ENCODE measurements at regions of chr14 and their contacts with region 1.

Region 1: DNA sequence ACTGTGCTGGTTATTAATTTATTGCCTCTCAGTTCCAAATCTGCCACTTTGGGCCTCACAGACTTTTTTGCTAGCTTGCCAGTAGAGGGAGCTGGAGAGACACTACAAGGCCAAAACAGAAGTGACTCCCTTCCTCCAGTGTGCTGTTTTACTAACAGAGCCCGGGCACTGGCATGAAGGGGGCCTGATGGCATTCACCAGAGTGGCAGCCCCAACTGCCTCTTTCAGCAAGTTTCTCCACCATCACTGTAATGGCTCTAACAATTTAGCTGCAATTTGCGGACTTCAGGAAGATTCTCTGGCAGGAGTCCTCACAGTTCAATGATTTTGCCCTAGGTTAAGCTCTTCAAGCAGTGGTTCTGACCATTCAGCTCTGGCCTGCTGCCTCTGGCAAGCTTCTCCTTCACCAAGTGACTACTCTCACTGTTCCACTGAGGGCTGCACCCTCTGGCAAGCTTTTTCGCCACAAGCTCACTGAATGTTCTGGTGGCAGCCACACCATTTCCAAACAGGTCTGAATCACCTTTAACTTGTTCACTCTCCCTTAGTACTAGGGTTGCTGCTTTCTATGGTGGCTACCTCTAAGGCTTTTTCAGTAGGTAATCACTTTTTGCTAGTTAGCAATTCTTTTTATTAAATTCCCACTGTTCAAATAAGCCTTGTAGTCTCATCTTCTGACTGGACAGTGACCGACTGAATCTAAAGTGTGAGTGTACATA is 104.9 kb downstream of the ZC3H14 start:
- DNase-seq: peak; percentile 73
- CTCF ChIP-seq: peak; percentile 79

Region 2: GRCh38 chr14:88521821-88522220 is 145.9 kb before region 1 on chr14:
- CTCF ChIA-PET with region 1: no interaction called
- POLR2A ChIA-PET with region 1: no interaction called
- DNase-seq: no peak
- CTCF ChIP-seq: no peak

Region 3: DNA sequence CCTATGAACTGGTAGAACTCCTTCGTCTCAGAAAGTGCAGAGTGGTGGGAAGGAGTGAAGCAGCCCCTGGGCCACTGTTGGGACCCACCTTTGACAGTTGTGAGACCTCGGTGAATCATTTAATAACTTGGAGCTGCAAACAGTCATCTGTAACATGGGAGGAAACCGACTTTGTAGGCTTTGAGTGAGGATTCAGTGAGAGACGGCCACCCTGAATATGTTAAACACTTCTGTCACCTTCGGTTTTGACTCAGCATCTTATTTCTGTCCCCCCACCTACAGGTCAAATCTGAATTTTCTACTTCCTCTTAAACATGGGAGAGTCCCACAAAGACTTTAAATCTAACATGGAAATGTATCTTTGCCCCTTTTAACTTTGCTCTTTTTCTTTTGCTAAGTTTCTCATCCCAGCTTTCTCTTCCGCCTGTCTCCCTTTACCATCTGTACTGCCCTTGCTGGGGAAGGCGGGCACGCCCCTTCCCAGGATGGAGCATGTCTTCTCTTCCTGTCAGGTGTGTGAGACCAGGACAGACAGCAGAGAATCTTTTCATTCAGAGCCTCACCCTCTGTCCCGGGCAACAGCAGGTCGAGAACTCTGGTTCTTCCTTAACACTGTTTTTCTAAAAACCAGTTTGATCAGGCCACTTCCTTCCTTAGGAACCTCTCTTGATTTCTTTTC is 67.8 kb before region 1 on chr14:
- CTCF ChIA-PET with region 1: interaction called, 15 read pairs
- POLR2A ChIA-PET with region 1: no interaction called
- DNase-seq: peak; percentile 73
- CTCF ChIP-seq: no peak

Region 4: DNA sequence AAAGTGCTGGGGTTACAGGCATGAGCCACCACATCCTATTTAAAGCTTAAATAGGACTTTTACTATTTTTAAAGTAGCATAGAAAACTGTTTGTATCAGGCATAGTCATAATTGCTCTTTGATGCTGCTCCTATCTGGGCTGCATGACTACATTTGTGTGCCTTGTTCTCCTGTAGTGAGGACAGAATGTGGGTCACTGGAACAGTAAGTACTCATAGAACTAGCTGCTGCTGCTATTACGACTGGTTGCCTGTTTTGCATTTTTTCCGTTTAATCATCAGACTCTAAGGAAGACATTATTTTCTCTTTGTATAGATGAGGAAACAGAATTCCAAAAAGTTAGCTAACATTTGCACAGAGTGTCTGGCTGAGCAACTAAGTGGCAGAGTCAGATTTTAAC is 62.1 kb before region 1 on chr14:
- CTCF ChIA-PET with region 1: interaction called, 15 read pairs
- POLR2A ChIA-PET with region 1: no interaction called
- DNase-seq: no peak
- CTCF ChIP-seq: no peak

Region 5: DNA sequence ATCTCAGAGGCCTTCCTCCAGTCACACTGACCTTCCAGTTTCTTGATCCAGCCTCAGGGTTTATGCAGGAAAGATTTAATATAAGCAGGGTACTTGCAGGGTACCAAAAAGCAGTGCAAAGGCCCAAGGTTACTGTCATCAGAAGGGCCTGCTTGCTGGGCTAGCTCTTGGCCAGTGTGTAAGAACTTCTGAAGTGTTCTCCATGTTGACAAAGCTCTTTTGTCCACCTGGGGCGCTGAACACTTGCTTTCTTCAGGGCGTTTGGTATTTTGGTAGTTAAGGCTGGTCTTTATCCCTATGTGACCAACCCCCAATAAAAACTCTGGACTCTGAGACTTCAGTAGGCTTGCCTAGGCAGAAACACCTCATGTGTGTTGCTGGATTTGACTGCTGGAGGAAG is 35.2 kb before region 1 on chr14:
- CTCF ChIA-PET with region 1: interaction called, 24 read pairs
- POLR2A ChIA-PET with region 1: no interaction called
- DNase-seq: no peak
- CTCF ChIP-seq: no peak

Region 6: GRCh38 chr14:88682495-88683114 is 14.9 kb after region 1 on chr14:
- CTCF ChIA-PET with region 1: interaction called, 46 read pairs
- POLR2A ChIA-PET with region 1: no interaction called
- DNase-seq: no peak
- CTCF ChIP-seq: no peak

Region 7: DNA sequence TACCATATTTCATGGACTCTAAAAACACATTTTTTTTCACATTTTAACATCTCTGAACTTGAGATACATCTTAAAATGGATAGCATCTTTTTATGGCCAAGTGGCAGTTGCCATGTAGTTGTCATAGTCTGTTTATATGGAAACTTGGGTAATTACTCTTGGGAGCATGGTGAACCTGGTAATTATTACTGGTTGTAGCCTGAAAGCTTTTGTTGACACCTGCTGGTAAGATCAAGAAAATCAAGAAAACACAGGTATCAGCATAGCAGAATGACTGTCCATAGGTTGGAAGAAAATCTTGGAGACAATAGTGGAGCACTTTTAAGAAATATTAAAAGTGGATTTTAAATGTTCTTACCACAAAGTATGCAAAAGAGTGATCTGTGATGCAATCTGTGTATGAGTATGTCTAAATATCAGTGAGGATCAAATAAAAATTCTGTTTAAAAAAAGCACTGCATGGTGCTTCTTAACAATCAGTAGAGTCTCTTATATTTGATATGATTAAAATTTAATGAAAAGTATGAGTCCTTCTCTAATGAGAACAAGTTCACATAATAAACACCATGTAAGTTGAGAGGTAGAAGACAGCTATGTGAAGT is 200.9 kb after region 1 on chr14:
- CTCF ChIA-PET with region 1: interaction called, 33 read pairs
- POLR2A ChIA-PET with region 1: no interaction called
- DNase-seq: peak; percentile 6
- CTCF ChIP-seq: peak; percentile 35

Measured in GM10248 (cell line).